Activated CD4-positive, alpha-beta T cell treated with anti-CD3 and anti-CD28 coated beads for 36 hours (primary cell): ENCODE measurements at regions of chr15 and their contacts with region 1.

Region 1: DNA sequence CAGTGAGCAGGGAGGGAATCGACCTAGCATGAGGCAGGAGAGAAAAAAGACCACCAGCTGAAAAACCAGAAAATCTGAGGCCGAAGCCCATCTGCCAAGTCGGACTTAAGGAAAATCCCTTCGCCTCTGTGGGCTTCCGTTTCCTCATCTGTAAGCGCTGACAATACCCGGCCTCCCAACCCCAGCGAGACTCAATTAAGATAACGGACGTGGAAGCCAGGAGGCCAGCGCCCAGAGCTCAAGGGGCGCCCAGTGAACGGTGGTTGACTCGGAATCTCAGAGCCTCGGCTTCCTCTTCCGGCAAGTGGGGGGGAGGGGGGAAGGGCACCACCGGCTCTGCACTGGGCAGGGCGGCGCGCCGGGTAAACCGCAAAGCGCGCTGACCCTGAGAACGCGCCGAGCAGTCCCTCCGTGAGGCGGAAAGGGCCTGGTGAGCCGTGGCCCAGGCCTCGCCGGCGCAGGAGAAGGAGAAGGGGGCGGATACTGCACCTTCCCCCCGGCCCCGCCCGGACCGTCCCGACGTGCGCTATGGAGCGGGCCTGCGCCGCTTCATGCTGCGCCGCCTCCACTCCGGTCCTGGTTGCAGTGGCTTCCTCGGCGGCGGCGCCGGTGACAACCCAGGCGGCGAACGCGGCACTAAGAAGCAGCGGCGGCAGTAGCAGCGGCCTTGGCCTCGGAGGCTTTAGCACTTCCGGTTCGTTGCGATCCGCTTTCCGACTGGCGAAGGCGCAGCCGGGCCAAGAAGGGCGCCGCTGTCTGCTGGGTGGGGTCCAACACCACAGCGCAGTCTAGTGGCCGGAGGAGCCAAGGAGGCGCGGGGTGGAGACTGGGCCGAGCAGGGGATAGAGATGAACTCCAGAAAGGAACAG is at the start of gene DPP8:
- DNase-seq: peak; percentile 97
- ATAC-seq: peak; percentile 97
- H3K4me3 Mint-ChIP-seq: peak within 1 kb of the TSS; percentile 91
- H3K27ac Mint-ChIP-seq: peak within 1 kb of the TSS; percentile 88
- H3K4me1 Mint-ChIP-seq: peaks cover 36% of the 10 kb centered on the region
- H3K27me3 Mint-ChIP-seq: no peaks in the 10 kb centered on the region
- total RNA-seq, gene DPP8: 25.8 to 26.4 TPM

Region 2: DNA sequence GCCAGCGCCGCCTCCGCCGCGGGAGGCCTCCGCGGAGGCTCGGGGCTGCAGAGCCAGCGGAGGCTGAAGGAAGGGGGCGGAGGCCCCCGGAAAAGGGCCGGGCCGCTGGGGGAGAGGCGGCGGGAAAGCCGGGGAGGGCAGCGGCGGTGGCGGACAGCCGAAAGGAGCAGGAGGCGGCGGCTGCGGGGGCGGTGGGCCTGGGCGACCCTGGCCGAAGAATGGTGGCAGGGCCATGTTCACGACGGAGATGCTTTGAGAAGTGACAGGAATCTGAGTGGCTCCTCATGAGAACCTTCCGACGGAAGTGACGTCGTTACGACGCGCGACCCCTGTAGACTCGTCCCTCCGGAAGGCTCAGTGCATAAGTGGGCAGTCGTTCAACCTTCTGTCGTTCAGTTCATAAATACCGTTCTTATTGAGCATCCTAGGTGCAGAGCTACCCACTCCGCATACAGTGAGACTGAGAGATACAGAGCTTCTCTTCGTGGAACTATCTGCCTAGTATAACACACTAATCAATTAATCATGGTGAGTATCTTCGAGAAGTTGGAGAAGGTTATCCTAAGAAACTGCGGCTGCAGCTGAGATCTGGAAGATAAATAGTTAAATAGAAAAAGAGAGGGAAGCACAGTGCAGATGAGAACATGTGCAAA is 383.6 kb before region 1 on chr15 and contains the start of gene PDCD7:
- CTCF ChIA-PET with region 1: no interaction called
- POLR2A ChIA-PET with region 1: no interaction called
- intact Hi-C with region 1: loop called in 1 of 2 experiments (anchors 1 kb)
- DNase-seq: peak; percentile 91
- ATAC-seq: peak; percentile 96
- H3K4me3 Mint-ChIP-seq: peak within 1 kb of the TSS; percentile 85
- H3K27ac Mint-ChIP-seq: peak within 1 kb of the TSS; percentile 93
- H3K4me1 Mint-ChIP-seq: peaks cover 26% of the 10 kb centered on the region
- H3K27me3 Mint-ChIP-seq: no peaks in the 10 kb centered on the region
- total RNA-seq, gene PDCD7: 16.6 to 24.8 TPM

Region 3: GRCh38 chr15:65460741-65461347 is 56.4 kb before region 1 on chr15:
- CTCF ChIA-PET with region 1: no interaction called
- POLR2A ChIA-PET with region 1: no interaction called
- intact Hi-C with region 1: loop called in 1 of 2 experiments (anchors 2 kb)
- DNase-seq: peak; percentile 72
- ATAC-seq: peak; percentile 99
- H3K4me3 Mint-ChIP-seq: no peak overlapping the region
- H3K27ac Mint-ChIP-seq: peak overlapping the region; percentile 12
- H3K4me1 Mint-ChIP-seq: peaks cover 10% of the 10 kb centered on the region
- H3K27me3 Mint-ChIP-seq: no peaks in the 10 kb centered on the region

Region 4: DNA sequence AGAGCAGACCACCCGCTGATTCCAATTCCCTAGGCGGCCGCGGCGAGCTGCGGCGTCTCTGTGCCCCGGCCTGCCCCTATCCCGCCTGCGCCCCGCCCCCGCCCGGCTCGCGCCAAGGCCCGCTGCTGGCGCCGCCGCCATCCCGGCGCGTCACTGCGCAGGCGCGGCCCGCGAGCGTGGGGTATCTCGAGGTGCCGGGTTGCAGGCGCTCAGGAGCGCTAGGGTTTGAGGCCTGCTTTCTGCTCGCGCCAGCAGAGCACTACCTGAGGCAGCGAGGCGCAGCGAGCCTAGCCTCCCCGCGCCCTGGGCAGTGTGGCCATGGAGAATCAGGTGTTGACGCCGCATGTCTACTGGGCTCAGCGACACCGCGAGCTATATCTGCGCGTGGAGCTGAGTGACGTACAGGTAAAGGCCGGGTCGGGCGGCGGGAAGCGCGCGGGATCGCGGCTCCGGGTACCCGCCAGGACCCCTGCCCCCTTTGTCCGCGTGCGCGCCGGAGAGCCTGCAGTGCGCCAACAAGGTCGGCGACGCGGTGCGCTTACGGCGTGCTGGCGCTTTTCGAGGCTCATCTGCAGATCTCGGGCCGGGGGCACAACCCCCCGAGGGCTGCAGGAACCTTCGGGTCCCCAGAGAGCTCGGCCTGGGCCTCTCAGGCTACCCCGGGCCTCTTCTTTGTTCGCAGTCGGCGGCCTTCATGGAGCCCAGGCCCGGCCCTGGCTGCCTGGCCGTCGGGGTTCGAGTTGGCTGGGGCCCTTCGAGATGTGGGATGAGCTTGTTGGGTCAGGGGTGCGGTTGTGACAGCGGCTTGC is 13.3 kb after region 1 on chr15 and contains the start of gene HACD3:
- CTCF ChIA-PET with region 1: interaction called, 6 read pairs
- POLR2A ChIA-PET with region 1: interaction called, 10 read pairs
- intact Hi-C with region 1: loop called (anchors 1 to 2 kb)
- DNase-seq: peak; percentile 95
- ATAC-seq: peak; percentile 93
- H3K4me3 Mint-ChIP-seq: peak within 1 kb of the TSS; percentile 78
- H3K27ac Mint-ChIP-seq: peak within 1 kb of the TSS; percentile 91
- H3K4me1 Mint-ChIP-seq: peaks cover 32% of the 10 kb centered on the region
- H3K27me3 Mint-ChIP-seq: no peaks in the 10 kb centered on the region
- total RNA-seq, gene HACD3: 23.4 to 27.3 TPM

Region 5: GRCh38 chr15:66293419-66294156 is 776.4 kb after region 1 on chr15 and contains the start of gene DIS3L:
- CTCF ChIA-PET with region 1: no interaction called
- POLR2A ChIA-PET with region 1: no interaction called
- intact Hi-C with region 1: loop called in 1 of 2 experiments (anchors 1 kb)
- DNase-seq: peak; percentile 75
- ATAC-seq: peak; percentile 80
- H3K4me3 Mint-ChIP-seq: peak within 1 kb of the TSS; percentile 86
- H3K27ac Mint-ChIP-seq: peak within 1 kb of the TSS; percentile 90
- H3K4me1 Mint-ChIP-seq: peaks cover 49% of the 10 kb centered on the region
- H3K27me3 Mint-ChIP-seq: no peaks in the 10 kb centered on the region
- total RNA-seq, gene DIS3L: 24.6 to 25.9 TPM

Region 6: GRCh38 chr15:66497502-66498455 is 980.5 kb after region 1 on chr15 and contains the start of gene SNAPC5:
- CTCF ChIA-PET with region 1: no interaction called
- POLR2A ChIA-PET with region 1: no interaction called
- intact Hi-C with region 1: loop called in 1 of 2 experiments (anchors 1 kb)
- DNase-seq: peak; percentile 99
- ATAC-seq: peak; percentile 90
- H3K4me3 Mint-ChIP-seq: peak within 1 kb of the TSS; percentile 85
- H3K27ac Mint-ChIP-seq: peak within 1 kb of the TSS; percentile 93
- H3K4me1 Mint-ChIP-seq: peaks cover 56% of the 10 kb centered on the region
- H3K27me3 Mint-ChIP-seq: no peaks in the 10 kb centered on the region
- total RNA-seq, gene SNAPC5: 25.7 to 30.1 TPM

Region 7: GRCh38 chr15:66504563-66505429 is 987.6 kb after region 1 on chr15 and contains the starts of genes RPL4 and ZWILCH:
- CTCF ChIA-PET with region 1: no interaction called
- POLR2A ChIA-PET with region 1: no interaction called
- intact Hi-C with region 1: loop called in 1 of 2 experiments (anchors 2 kb)
- DNase-seq: peak; percentile 85
- ATAC-seq: peak; percentile 89
- H3K4me3 Mint-ChIP-seq: peak within 1 kb of the TSS; percentile 88
- H3K27ac Mint-ChIP-seq: peak within 1 kb of the TSS; percentile 98
- H3K4me1 Mint-ChIP-seq: peaks cover 56% of the 10 kb centered on the region
- H3K27me3 Mint-ChIP-seq: no peaks in the 10 kb centered on the region
- total RNA-seq, gene RPL4: 4,227 to 4,959 TPM
- total RNA-seq, gene ZWILCH: 27.4 to 31.1 TPM